Lower leg skin (tissue), 4 donors: ENCODE measurements at regions of chr20 and their contacts with region 1.

Region 1: DNA sequence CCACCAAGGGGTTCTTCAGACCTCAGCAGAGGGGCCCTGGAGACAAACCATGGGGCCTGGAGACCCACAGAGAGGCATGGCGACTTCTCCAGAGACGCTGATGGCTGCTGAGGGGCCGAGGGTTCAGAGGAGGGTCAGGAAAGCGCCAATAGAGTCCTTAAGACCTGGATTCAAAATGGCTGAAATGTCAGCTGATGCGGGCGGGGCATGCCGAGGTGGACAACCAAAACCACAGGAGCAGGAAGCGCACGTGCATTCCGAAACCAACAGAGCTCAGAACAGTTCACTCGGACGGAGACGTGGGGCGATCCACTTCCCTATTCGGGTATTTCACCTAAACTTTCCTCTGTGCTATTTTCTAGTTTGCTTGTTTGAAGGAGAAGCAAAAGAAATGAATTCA is 99.9 kb upstream of the RIN2 start:
- DNase-seq: peak in 1 of 2 donors; percentile 33
- H3K4me3 ChIP-seq: no peak overlapping the region
- CTCF ChIP-seq: no peak
- POLR2A ChIP-seq: no peak

Region 2: GRCh38 chr20:18632196-18633009 is 1025.7 kb before region 1 on chr20:
- intact Hi-C with region 1: loop called (anchors 5 kb)
- DNase-seq: peak; percentile 32 to 86
- H3K4me3 ChIP-seq: no peak overlapping the region
- CTCF ChIP-seq: peak in 1 of 3 donors; percentile 35
- POLR2A ChIP-seq: no peak